HCT116 (cell line): ENCODE measurements at regions of chr3 and their contacts with region 1.

Region 1: GRCh38 chr3:43855674-43856299 is 165.0 kb downstream of the ABHD5 start:
- DNase-seq: peak; percentile 27
- ATAC-seq: peak; percentile 98
- H3K4me3 ChIP-seq: no peak overlapping the region
- H3K27ac ChIP-seq: no peak overlapping the region
- H3K4me1 ChIP-seq: 0 out of 4 replicates have a peak, but pooled peaks cover 0 to 2% of the 10 kb centered on the region in 2 experiments
- H3K27me3 ChIP-seq: peaks cover 31% of the 10 kb centered on the region; the same call in 1 of the 2 replicates
- CTCF ChIP-seq: peak; percentile 63 to 83 (median 70); a peak in 5 of 6 replicates
- POLR2A ChIP-seq: no peak
- RAD21 ChIP-seq: peak; percentile 79

Region 2: DNA sequence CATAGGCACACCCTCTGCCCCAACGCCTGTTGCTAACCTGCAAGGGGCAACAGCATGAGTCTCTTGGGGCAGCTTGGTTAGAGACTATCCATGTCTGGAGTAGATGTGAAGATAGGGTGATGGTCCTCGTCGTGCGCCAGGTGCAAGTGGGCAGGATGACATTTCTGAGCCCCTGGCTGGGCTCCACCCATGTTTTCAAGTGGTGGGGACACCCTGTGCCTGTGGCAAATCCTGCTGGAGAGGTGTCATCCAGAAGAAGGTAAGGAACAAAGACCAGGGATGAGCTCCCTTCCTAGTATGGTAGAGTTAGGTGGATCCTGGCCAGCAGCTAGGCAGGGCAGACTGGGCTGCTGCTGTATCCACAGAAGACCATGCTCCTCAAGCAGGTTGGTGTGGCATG is 12.4 kb before region 1 on chr3:
- CTCF ChIA-PET with region 1: interaction called, 10 read pairs
- POLR2A ChIA-PET with region 1: no interaction called
- RAD21 ChIA-PET with region 1: no interaction called
- intact Hi-C with region 1: no loop called
- DNase-seq: no peak
- ATAC-seq: no peak
- H3K4me3 ChIP-seq: no peak overlapping the region
- H3K27ac ChIP-seq: no peak overlapping the region
- H3K4me1 ChIP-seq: no peaks in the 10 kb centered on the region
- H3K27me3 ChIP-seq: no peaks in the 10 kb centered on the region
- CTCF ChIP-seq: no peak
- POLR2A ChIP-seq: no peak
- RAD21 ChIP-seq: no peak

Region 3: DNA sequence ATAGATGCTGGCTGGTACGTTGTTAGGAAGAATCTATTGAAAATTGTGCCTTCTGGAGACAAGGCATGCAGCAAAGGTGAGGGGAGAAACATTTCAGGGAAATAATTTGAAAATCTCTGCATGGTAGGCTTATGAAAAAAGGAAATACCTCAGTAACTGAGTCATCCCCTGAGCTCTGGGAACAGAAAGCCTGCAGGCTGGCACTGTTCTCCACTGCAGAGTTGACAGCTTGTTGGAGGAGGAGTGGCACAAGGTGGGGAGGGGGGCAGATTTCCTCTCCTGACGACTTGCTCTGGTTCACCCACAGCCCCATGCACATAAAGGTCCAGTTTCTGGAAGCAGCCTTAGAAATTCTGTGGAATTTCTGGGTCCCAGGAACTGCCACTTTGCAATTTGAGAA is 14.3 kb after region 1 on chr3:
- CTCF ChIA-PET with region 1: interaction called, 23 read pairs
- POLR2A ChIA-PET with region 1: interaction called, 4 read pairs
- RAD21 ChIA-PET with region 1: no interaction called
- intact Hi-C with region 1: no loop called
- DNase-seq: no peak
- ATAC-seq: peak; percentile 70
- H3K4me3 ChIP-seq: peak overlapping the region in 1 of 2 experiments; percentile 9; a peak in 1 of 4 replicates
- H3K27ac ChIP-seq: no peak overlapping the region
- H3K4me1 ChIP-seq: peaks cover 11 to 52% of the 10 kb centered on the region in 2 experiments
- H3K27me3 ChIP-seq: no peaks in the 10 kb centered on the region
- CTCF ChIP-seq: no peak
- POLR2A ChIP-seq: no peak
- RAD21 ChIP-seq: 0 out of 2 replicates have a peak, but pooled peaks have one; percentile 7

Region 4: GRCh38 chr3:44114142-44114541 is 258.4 kb after region 1 on chr3:
- CTCF ChIA-PET with region 1: interaction called, 11 read pairs
- POLR2A ChIA-PET with region 1: no interaction called
- RAD21 ChIA-PET with region 1: no interaction called
- intact Hi-C with region 1: loop called (anchors 2 kb)
- DNase-seq: peak; percentile 42
- ATAC-seq: peak; percentile 99
- H3K4me3 ChIP-seq: no peak overlapping the region
- H3K27ac ChIP-seq: no peak overlapping the region
- H3K4me1 ChIP-seq: peaks cover 0 to 11% of the 10 kb centered on the region in 2 experiments; a peak in 3 of 4 replicates
- H3K27me3 ChIP-seq: peaks cover 6% of the 10 kb centered on the region; the same call in 1 of the 2 replicates
- CTCF ChIP-seq: peak; percentile 61 to 85 (median 72); a peak in 5 of 6 replicates
- POLR2A ChIP-seq: no peak
- RAD21 ChIP-seq: peak; percentile 69

Region 5: GRCh38 chr3:44198284-44199269 is 342.8 kb after region 1 on chr3:
- CTCF ChIA-PET with region 1: interaction called, 13 read pairs
- POLR2A ChIA-PET with region 1: no interaction called
- RAD21 ChIA-PET with region 1: no interaction called
- intact Hi-C with region 1: no loop called
- DNase-seq: peak; percentile 56
- ATAC-seq: peak; percentile 94
- H3K4me3 ChIP-seq: no peak overlapping the region
- H3K27ac ChIP-seq: no peak overlapping the region
- H3K4me1 ChIP-seq: peaks cover 0 to 4% of the 10 kb centered on the region in 2 experiments; a peak in 1 of 4 replicates
- H3K27me3 ChIP-seq: 0 out of 2 replicates have a peak, but pooled peaks cover 3% of the 10 kb centered on the region
- CTCF ChIP-seq: peak; percentile 79 to 80 (median 79)
- POLR2A ChIP-seq: no peak
- RAD21 ChIP-seq: peak; percentile 94